Activated CD4-positive, alpha-beta memory T cell treated with anti-CD3 and anti-CD28 coated beads for 36 hours (primary cell): ENCODE measurements at regions of chr14 and their contacts with region 1.

Region 1: DNA sequence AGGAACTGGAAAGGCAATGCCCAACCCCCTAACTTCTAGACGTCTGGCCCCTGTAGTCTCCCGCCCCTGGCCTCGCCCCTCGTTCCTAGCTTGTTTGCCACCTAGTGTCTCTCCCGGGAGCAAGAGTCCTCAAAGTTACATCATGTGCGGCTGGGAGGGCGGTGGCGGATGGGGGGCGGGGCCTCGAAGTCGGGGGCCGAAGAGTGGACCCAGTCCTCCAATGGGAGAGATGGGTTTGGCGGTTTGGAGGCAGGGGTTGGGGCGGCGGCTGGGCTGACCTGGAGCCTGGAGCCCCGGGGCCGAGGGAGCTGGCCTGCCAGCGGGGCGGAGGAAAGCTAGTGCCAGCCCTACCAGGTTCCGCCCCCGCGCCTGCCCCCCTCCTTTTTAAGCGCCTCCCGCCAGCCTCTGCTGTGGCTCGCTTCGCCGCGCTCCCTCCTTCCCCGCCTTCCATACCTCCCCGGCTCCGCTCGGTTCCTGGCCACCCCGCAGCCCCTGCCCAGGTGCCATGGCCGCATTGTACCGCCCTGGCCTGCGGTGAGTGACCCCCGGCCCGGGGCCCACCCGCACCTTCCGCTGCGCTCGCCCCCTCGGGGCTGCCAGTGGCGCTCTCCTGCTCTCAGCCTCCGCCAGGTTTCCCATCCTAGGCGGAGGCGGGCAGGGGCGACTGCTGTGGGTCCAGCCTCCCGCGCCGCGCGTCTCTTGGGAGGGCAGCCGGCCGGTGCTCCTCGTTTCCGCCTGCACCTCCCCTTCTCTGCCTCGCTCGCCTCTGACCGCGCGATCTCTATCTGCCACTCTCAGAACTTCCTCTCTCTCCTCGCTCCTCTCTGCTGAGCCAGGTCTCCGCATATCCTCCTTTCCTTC is at the start of gene PCK2:
- DNase-seq: peak; percentile 94
- H3K4me3 Mint-ChIP-seq: peak within 1 kb of the TSS; percentile 94
- H3K27ac Mint-ChIP-seq: peak within 1 kb of the TSS; percentile 97
- H3K4me1 Mint-ChIP-seq: peaks cover 28% of the 10 kb centered on the region
- H3K27me3 Mint-ChIP-seq: no peaks in the 10 kb centered on the region
- total RNA-seq, gene PCK2: 118 to 125 TPM

Region 2: DNA sequence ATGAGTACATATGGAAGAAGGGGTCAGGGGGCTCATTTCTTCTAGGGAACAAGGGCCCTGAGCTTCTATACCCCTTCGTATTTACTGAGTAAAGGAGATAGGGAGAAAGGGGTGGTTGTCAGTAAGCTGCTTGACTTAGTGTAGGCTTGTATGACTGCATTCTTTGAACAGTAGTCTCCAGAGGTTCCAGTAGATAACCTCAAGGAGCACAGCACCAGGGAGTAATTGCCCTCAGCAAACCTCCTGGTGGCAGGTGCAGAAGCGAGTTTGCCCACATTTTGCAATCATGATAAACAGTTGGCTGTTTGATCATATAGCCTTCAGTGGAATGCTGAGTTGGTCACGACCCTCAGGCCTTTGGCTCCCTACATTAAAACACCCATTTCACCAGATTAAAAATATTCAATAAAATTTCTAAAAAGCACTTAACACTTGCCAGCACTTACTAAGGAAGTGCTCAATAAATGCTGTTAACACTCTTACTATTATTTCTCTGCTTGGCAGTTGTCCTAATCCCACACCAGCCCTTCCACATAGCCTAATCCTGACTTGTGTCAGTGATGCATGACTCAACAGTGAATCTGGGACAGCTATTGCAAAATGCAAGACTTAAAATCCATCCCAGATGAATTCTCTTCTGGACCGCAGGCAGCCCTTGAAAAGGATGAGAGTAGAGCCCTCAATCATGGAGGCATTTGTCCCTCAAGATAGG is 109.1 kb before region 1 on chr14:
- CTCF ChIA-PET with region 1: interaction called, 7 read pairs
- POLR2A ChIA-PET with region 1: no interaction called
- intact Hi-C with region 1: loop called (anchors 10 kb)
- DNase-seq: no peak
- H3K4me3 Mint-ChIP-seq: no peak overlapping the region
- H3K27ac Mint-ChIP-seq: no peak overlapping the region
- H3K4me1 Mint-ChIP-seq: peaks cover 19% of the 10 kb centered on the region
- H3K27me3 Mint-ChIP-seq: no peaks in the 10 kb centered on the region

Region 3: GRCh38 chr14:24013654-24014514 is 80.2 kb before region 1 on chr14:
- CTCF ChIA-PET with region 1: interaction called, 8 read pairs
- POLR2A ChIA-PET with region 1: no interaction called
- intact Hi-C with region 1: loop called (anchors 1 kb)
- DNase-seq: peak; percentile 53
- H3K4me3 Mint-ChIP-seq: no peak overlapping the region
- H3K27ac Mint-ChIP-seq: no peak overlapping the region
- H3K4me1 Mint-ChIP-seq: peaks cover 24% of the 10 kb centered on the region
- H3K27me3 Mint-ChIP-seq: peaks cover 6% of the 10 kb centered on the region

Region 4: DNA sequence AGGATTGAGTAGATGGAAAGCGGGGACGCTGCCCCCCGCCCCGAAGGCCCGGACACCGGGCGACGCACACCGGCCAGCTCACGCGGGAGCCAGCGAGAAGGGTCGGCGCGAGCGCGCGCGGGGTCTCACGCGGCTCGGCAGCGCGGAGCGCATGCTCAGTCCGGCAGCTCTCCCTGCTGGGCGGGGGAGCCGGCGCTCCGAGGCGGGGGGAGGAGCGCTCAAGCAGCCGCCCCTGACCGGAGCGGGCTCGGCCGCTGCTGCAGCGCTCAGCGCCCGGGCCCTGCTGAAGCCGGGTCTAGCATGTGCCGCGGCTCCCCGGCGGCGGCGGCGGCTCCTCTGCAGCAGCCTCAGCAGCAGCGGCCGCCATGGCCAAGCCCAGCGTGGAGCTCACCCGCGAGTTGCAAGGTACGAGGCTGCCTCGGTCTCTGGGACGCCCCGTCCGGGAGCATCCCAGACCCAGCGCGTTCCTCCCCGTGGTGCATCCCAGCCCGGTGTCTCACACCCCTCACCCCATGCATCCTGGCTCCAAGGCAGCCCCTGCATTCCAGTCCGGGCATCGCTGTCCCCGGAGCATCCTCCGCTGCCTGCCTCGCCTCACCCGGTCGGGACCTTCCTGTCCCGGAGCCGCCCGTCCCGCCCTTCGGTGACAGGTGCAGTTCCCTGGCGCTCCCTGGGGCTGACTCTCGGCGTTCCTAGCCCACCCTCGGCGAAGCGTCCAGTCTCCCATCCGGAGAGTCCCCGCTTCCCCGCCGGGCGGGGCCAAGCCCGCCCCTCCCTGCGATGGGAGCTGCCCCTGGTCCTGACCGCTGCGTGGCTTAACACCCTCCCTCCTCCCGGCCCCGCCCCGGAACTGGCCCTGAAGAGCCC is 42.1 kb before region 1 on chr14 and contains the start of gene CARMIL3:
- CTCF ChIA-PET with region 1: interaction called, 458 read pairs
- POLR2A ChIA-PET with region 1: interaction called, 28 read pairs
- intact Hi-C with region 1: loop called (anchors 1 kb)
- DNase-seq: peak; percentile 74
- H3K4me3 Mint-ChIP-seq: peak within 1 kb of the TSS; percentile 70
- H3K27ac Mint-ChIP-seq: no peak within 1 kb of the TSS
- H3K4me1 Mint-ChIP-seq: peaks cover 20% of the 10 kb centered on the region
- H3K27me3 Mint-ChIP-seq: peaks cover 4% of the 10 kb centered on the region
- total RNA-seq, gene CARMIL3: 0.75 to 1.00 TPM

Region 5: GRCh38 chr14:24080888-24081738 is 13.0 kb before region 1 on chr14:
- CTCF ChIA-PET with region 1: interaction called, 93 read pairs
- POLR2A ChIA-PET with region 1: interaction called, 30 read pairs
- intact Hi-C with region 1: loop called (anchors 1 kb)
- DNase-seq: peak; percentile 85
- H3K4me3 Mint-ChIP-seq: peak overlapping the region; percentile 72
- H3K27ac Mint-ChIP-seq: peak overlapping the region; percentile 49
- H3K4me1 Mint-ChIP-seq: peaks cover 16% of the 10 kb centered on the region
- H3K27me3 Mint-ChIP-seq: no peaks in the 10 kb centered on the region

Region 6: GRCh38 chr14:24108336-24108874 is 14.3 kb after region 1 on chr14:
- CTCF ChIA-PET with region 1: interaction called, 241 read pairs
- POLR2A ChIA-PET with region 1: interaction called, 46 read pairs
- intact Hi-C with region 1: loop called (anchors 1 kb)
- DNase-seq: no peak
- H3K4me3 Mint-ChIP-seq: peak overlapping the region; percentile 11
- H3K27ac Mint-ChIP-seq: peak overlapping the region; percentile 91
- H3K4me1 Mint-ChIP-seq: peaks cover 22% of the 10 kb centered on the region
- H3K27me3 Mint-ChIP-seq: no peaks in the 10 kb centered on the region

Region 7: DNA sequence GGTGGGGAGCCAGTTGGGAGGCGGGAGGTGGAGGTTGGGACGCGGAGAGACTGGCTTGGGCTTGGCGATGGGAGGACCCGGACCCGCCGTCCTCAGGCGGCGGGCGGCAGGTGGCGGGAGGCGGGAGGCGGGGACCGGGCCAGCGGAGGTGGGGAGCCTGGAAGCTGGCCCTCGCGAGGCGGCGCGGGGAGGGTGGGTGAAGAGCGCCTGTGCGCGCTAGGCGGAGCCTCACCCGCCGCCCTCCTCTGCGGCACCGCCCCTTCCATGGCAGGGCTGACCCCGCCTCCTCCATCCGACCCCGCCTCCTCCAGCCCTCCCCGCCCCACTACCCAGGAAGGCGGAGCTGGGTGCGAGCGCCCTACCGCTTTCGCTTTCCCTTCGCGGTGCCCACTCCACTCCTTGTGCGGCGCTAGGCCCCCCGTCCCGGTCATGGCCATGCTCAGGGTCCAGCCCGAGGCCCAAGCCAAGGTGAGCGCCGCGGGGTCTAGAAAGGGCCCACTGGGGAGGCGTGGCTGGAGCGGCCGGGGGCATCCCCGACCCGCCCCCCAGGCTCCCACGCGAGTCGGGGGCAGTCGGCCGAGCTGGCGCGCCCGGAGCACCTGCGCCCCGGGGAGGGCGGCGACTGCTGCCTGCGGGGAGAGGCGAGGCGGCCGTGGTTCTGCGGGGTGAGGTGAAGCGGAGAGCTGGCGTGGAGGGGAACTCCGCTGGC is 41.9 kb after region 1 on chr14 and contains the start of gene PSME1:
- CTCF ChIA-PET with region 1: interaction called, 10 read pairs
- POLR2A ChIA-PET with region 1: interaction called, 10 read pairs
- intact Hi-C with region 1: no loop called
- DNase-seq: peak; percentile 97
- H3K4me3 Mint-ChIP-seq: peak within 1 kb of the TSS; percentile 95
- H3K27ac Mint-ChIP-seq: peak within 1 kb of the TSS; percentile 96
- H3K4me1 Mint-ChIP-seq: peaks cover 54% of the 10 kb centered on the region
- H3K27me3 Mint-ChIP-seq: no peaks in the 10 kb centered on the region
- total RNA-seq, gene PSME1: 403 to 427 TPM